ENCODE measurements at regions of chr17 and their contacts with region 1.

Region 1: GRCh38 chr17:17356149-17356930 is 53.2 kb downstream of the NT5M start:
- DNase-seq: peak; percentile 83 to 93 (median 89)
- H3K4me3 ChIP-seq: no peak overlapping the region
- H3K27ac ChIP-seq: no peak overlapping the region
- H3K4me1 ChIP-seq: peaks cover 0 to 18% (median 7%) of the 10 kb centered on the region in 4 experiments
- H3K27me3 ChIP-seq: no peaks in the 10 kb centered on the region

Region 2: GRCh38 chr17:17252149-17252661 is 104.1 kb before region 1 on chr17:
- CTCF ChIA-PET with region 1: no interaction called
- POLR2A ChIA-PET with region 1: no interaction called
- DNase-seq: peak; percentile 23 to 78 (median 27)
- H3K4me3 ChIP-seq: no peak overlapping the region
- H3K27ac ChIP-seq: no peak overlapping the region
- H3K4me1 ChIP-seq: no peaks in the 10 kb centered on the region
- H3K27me3 ChIP-seq: no peaks in the 10 kb centered on the region

Region 3: GRCh38 chr17:17344462-17345293 is 11.7 kb before region 1 on chr17:
- CTCF ChIA-PET with region 1: interaction called, 13 read pairs
- POLR2A ChIA-PET with region 1: no interaction called
- DNase-seq: no peak
- H3K4me3 ChIP-seq: no peak overlapping the region
- H3K27ac ChIP-seq: no peak overlapping the region
- H3K4me1 ChIP-seq: no peaks in the 10 kb centered on the region
- H3K27me3 ChIP-seq: no peaks in the 10 kb centered on the region

Region 4: DNA sequence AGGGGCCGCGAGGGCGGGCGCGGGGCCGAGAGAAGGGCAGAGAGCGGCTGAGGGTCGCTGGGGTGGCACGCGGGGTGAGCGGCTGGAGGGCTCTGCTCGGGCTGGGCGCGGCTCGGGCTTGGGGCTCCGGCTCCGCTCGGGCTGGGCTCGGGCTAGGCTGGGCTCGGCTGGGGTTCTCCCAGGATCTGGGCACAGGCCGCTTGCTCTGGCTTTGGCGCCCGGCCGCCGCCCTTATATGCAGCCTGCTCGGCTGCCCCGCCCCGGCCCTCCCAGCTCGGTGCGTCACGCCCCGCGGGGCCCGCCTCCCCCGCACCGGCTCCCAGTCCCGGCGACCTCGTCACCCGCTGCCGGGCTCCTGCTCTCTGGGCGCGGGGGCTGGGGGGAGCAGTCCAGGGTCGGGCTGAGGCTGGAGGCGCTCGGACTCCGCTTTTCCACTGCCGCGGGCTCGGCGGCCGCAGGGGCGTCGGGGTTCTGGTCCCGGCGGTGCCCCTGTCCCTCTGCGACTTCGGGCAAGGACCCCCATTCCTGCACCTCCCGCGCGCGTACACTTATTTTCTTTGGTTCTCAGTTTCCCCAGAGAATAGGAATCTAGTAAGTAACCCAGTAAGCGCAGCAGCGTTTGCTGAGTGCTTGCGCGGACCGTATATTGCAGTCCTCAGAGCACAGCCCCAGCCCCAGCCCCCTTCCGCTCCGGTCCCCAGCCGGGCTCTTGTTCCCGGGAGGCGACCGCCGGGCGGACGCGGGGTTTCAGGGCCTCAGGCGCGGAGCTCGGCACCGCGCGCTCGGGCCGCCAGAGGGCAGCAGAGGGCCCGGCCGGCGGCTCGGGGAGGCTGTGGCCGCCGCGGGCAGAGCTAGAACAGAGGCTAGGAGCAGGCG is 140.1 kb after region 1 on chr17 and contains the start of gene RASD1:
- CTCF ChIA-PET with region 1: interaction called, 41 read pairs
- POLR2A ChIA-PET with region 1: interaction called, 3 read pairs
- DNase-seq: peak; percentile 67 to 80 (median 74)
- H3K4me3 ChIP-seq: peak within 1 kb of the TSS; percentile 37 to 79 (median 72)
- H3K27ac ChIP-seq: no peak within 1 kb of the TSS
- H3K4me1 ChIP-seq: peaks cover 0 to 25% (median 21%) of the 10 kb centered on the region in 4 experiments
- H3K27me3 ChIP-seq: peaks cover 0 to 15% (median 6%) of the 10 kb centered on the region in 5 experiments

Region 5: DNA sequence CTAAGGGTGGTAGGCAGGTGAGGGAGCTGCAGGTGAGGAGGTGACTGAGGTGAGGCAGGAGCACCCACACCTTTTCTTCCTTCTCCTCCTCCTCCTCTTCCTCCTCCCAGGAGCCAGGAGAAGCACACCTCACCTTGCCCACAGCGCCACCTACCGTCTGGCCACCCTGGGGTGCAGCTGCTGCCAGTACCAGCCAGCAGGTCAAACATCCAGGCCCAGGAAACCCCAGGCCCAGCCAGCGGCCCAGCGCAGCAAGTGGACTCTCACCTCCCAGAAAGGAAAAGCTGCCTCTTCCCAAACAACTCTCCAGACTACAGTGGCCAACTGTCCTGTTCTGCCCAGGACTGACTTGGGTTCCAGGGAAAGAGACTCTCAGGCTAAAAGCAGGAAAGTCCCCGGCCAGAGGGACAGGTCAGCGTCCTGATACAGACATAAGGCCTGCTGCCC is 212.4 kb after region 1 on chr17:
- CTCF ChIA-PET with region 1: interaction called, 39 read pairs
- POLR2A ChIA-PET with region 1: no interaction called
- DNase-seq: peak; percentile 43 to 52 (median 46)
- H3K4me3 ChIP-seq: no peak overlapping the region
- H3K27ac ChIP-seq: no peak overlapping the region
- H3K4me1 ChIP-seq: no peaks in the 10 kb centered on the region
- H3K27me3 ChIP-seq: no peaks in the 10 kb centered on the region

Region 6: DNA sequence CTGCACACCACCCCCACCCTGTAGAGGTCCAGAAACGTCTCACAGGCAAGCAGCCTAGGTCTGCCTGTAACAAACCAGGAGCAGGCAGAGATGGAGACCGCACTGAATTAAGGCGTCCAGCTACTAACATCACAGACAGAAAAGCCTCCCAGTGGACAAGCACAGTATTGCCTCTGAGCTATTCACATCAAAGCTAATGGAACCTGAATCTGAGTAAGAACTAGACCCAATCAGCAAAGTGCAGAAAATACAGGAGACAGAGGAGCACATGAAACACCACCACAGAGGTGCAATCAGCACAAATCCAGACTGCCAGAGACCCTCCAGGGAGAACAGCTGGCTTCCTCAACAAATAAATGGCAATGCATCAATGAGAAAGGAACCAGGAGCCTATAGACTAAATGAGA is 257.4 kb after region 1 on chr17:
- CTCF ChIA-PET with region 1: interaction called, 18 read pairs
- POLR2A ChIA-PET with region 1: no interaction called
- DNase-seq: peak; percentile 68 to 83 (median 79)
- H3K4me3 ChIP-seq: no peak overlapping the region
- H3K27ac ChIP-seq: no peak overlapping the region
- H3K4me1 ChIP-seq: no peaks in the 10 kb centered on the region
- H3K27me3 ChIP-seq: no peaks in the 10 kb centered on the region

Region 7: GRCh38 chr17:17641621-17642409 is 285.5 kb after region 1 on chr17:
- CTCF ChIA-PET with region 1: interaction called, 54 read pairs
- POLR2A ChIA-PET with region 1: no interaction called
- DNase-seq: peak; percentile 70 to 89 (median 82)
- H3K4me3 ChIP-seq: no peak overlapping the region
- H3K27ac ChIP-seq: no peak overlapping the region
- H3K4me1 ChIP-seq: no peaks in the 10 kb centered on the region
- H3K27me3 ChIP-seq: no peaks in the 10 kb centered on the region